T-cell (primary cell): ENCODE measurements at regions of chr12 and their contacts with region 1.

Region 1: GRCh38 chr12:67039995-67040860 is 228.9 kb upstream of the CAND1 start:
- DNase-seq: no peak
- ATAC-seq: no peak
- H3K4me3 ChIP-seq: no peak overlapping the region
- H3K4me3 Mint-ChIP-seq: no peak overlapping the region
- H3K27ac ChIP-seq: no peak overlapping the region
- H3K27ac Mint-ChIP-seq: no peak overlapping the region
- H3K4me1 ChIP-seq: no peaks in the 10 kb centered on the region
- H3K4me1 Mint-ChIP-seq: no peaks in the 10 kb centered on the region
- H3K27me3 ChIP-seq: no peaks in the 10 kb centered on the region
- H3K27me3 Mint-ChIP-seq: peaks cover 1 to 11% of the 10 kb centered on the region in 2 donors

Region 2: DNA sequence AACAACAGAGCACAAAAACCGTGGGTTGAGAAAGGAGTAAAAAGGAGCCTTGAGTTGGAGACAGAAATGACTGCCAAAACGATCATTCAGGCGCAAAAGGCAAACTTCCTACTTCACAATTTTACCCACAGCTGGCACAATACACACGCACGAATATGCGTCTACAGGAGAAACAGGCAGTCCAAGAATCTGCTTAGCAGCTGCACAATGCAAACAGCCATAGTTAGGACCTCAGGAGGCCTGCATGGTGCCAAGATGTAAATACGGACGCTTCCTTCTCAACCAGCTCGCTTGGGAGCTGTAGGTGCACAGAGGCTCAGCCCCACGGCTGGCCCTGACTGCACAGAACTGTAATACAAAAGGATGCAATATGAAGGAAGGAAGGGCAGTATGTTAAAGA is 21.2 kb before region 1 on chr12:
- CTCF ChIA-PET with region 1: no interaction called
- POLR2A ChIA-PET with region 1: no interaction called
- DNase-seq: no peak
- ATAC-seq: no peak
- H3K4me3 ChIP-seq: no peak overlapping the region
- H3K4me3 Mint-ChIP-seq: no peak overlapping the region
- H3K27ac ChIP-seq: no peak overlapping the region
- H3K27ac Mint-ChIP-seq: no peak overlapping the region
- H3K4me1 ChIP-seq: peaks cover 0 to 2% of the 10 kb centered on the region in 2 experiments
- H3K4me1 Mint-ChIP-seq: no peaks in the 10 kb centered on the region
- H3K27me3 ChIP-seq: no peaks in the 10 kb centered on the region
- H3K27me3 Mint-ChIP-seq: peaks cover 1 to 2% of the 10 kb centered on the region in 2 donors

Region 3: DNA sequence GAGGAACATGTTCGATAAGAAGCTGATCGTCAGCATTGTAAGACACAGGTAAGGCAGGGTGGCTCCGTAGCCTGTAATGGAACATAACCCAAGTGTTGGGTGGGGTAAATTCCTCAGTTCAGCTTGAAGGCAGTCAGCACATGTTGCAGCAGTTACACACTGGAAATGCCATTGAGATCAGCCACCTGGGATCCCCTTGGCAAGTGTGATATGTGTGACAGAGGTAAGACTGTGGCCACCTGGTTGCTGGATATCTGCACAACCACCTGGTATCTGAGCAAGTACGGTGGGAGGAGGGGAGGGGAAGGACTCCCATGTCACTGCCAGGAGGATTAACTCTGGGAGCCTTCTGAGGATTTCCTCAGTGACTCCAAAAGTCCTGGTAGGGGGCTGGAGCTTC is 71.0 kb after region 1 on chr12:
- CTCF ChIA-PET with region 1: no interaction called
- POLR2A ChIA-PET with region 1: interaction called in 1 of 2 experiments, 10 read pairs
- DNase-seq: no peak
- ATAC-seq: no peak
- H3K4me3 ChIP-seq: no peak overlapping the region
- H3K4me3 Mint-ChIP-seq: no peak overlapping the region
- H3K27ac ChIP-seq: no peak overlapping the region
- H3K27ac Mint-ChIP-seq: no peak overlapping the region
- H3K4me1 ChIP-seq: no peaks in the 10 kb centered on the region
- H3K4me1 Mint-ChIP-seq: no peaks in the 10 kb centered on the region
- H3K27me3 ChIP-seq: peaks cover 0 to 7% of the 10 kb centered on the region in 2 experiments
- H3K27me3 Mint-ChIP-seq: peaks cover 8 to 17% of the 10 kb centered on the region in 2 donors